AG04449 (cell line): ENCODE measurements at regions of chr3 and their contacts with region 1.

Region 1: GRCh38 chr3:179108086-179108485 is 36.5 kb upstream of the ZMAT3 start:
- DNase-seq: no peak
- H3K4me3 ChIP-seq: no peak overlapping the region
- CTCF ChIP-seq: no peak

Region 2: DNA sequence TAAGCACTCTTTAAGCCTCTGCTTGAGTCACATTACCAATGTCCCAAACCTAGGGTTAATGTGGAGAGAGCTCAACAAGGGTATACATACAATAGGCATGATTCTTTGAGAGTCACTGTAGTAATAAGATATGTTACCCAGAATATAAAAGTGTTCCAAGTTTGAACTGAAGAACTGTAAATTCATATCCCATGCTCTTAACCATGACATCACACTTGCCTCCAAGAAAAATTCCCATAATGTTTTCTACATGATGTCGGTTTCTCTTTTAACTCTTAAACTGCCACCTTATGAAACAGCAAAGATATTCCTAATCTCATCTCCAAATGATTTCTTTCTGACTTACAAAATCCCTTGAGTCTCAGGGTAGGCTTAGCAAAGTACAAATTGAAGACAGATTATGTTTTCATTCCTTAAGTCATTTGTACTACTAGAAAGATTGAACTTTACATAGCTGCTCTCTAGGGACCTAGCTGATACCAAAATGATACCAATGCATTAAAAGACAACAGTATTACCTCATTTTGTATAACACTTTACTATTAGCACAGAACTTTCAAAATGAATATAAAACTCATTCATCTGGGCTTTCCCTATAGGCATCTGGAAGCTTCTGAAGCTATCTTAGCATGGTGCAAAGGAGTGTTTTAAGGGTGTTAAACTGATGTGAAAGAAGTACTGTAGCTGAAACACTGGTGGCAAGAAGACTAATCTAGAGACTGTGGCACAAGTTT is 444.7 kb before region 1 on chr3:
- CTCF ChIA-PET with region 1: no interaction called
- POLR2A ChIA-PET with region 1: no interaction called
- DNase-seq: no peak
- H3K4me3 ChIP-seq: no peak overlapping the region
- CTCF ChIP-seq: no peak

Region 3: DNA sequence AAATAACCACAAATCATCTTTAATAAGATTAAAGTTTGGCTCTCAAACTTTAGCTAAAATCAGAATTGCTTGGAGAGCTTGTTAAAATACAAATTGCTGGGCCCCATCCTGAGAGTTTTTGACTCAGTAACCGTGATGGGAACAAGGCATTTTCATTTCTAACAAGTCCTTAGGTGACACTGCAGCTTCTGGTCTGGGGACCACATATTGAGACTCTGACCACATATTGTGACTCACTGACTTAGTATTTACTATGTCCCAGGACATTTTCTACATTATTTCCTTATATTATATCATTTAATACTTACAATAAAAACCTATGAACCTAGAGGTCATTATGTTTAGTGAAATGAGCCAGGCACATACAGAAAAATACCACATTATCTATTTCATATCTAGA is 201.0 kb before region 1 on chr3:
- CTCF ChIA-PET with region 1: no interaction called
- POLR2A ChIA-PET with region 1: no interaction called
- DNase-seq: no peak
- H3K4me3 ChIP-seq: no peak overlapping the region
- CTCF ChIP-seq: no peak

Region 4: GRCh38 chr3:179272385-179272784 is 164.3 kb after region 1 on chr3:
- CTCF ChIA-PET with region 1: interaction called, 15 read pairs
- POLR2A ChIA-PET with region 1: no interaction called
- DNase-seq: no peak
- H3K4me3 ChIP-seq: no peak overlapping the region
- CTCF ChIP-seq: peak; percentile 26